ENCODE measurements at regions of chr17 and their contacts with region 1.

Region 1: GRCh38 chr17:35747540-35748017 is 5.5 kb downstream of the GAS2L2 start:
- DNase-seq: peak; percentile 78
- H3K27ac ChIP-seq: peak overlapping the region; percentile 49
- CTCF ChIP-seq: peak; percentile 86

Region 2: GRCh38 chr17:35612924-35613521 is 134.6 kb before region 1 on chr17:
- CTCF ChIA-PET with region 1: interaction called, 64 read pairs
- POLR2A ChIA-PET with region 1: interaction called, 3 read pairs
- DNase-seq: peak; percentile 13
- H3K27ac ChIP-seq: no peak overlapping the region
- CTCF ChIP-seq: peak; percentile 77

Region 3: GRCh38 chr17:35736236-35736635 is 11.3 kb before region 1 on chr17:
- CTCF ChIA-PET with region 1: interaction called, 10 read pairs
- POLR2A ChIA-PET with region 1: no interaction called
- DNase-seq: no peak
- H3K27ac ChIP-seq: no peak overlapping the region
- CTCF ChIP-seq: no peak